Naive thymus-derived CD4-positive, alpha-beta T cell (primary cell): ENCODE measurements at regions of chr13 and their contacts with region 1.

Region 1: DNA sequence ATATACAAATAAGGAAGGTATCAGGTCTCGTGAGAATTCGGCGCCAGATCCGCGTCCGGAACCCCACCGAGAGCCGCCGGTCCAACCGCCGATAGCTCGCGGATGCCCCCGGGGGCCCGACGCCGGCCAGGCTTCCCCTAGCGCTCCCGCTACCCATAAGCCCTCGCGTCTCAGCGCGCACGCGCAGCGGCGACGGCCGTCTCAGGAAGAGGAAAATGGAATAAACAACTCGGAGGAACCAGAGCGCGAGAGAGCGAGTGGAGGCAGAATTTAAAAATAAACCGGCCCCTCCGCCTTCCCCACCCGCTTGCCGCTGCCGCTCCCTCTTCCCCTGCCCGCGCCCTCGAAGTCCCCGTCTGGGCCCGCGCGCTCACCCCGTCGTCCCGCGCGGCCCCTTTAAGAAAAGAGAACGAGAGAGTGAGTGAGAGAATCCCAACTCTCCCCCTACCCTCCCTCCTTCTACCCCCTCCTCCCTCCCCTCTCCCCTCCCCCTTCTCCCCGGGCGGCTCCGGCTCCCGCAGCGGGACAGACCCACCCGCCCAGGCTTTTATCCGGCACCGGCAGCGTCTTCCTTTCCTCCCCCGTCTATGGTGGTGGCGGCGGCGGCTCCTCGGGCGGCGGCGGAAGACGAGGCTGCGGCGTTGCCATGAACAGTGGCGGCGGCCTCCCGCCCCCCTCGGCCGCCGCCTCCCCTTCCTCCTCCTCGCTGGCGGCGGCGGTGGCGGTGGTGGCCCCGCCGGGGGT is at the start of gene PAN3:
- DNase-seq: peak; percentile 88 to 92 (median 91)
- ATAC-seq: peak; percentile 73
- H3K4me3 ChIP-seq: peak within 1 kb of the TSS; percentile 56
- H3K4me3 Mint-ChIP-seq: peak within 1 kb of the TSS; percentile 90 to 99 (median 96)
- H3K27ac ChIP-seq: peak within 1 kb of the TSS; percentile 99
- H3K27ac Mint-ChIP-seq: peak within 1 kb of the TSS; percentile 96 to 99 (median 98)
- H3K4me1 ChIP-seq: peaks cover 24% of the 10 kb centered on the region in 2 donors
- H3K4me1 Mint-ChIP-seq: peaks cover 43 to 52% (median 47%) of the 10 kb centered on the region in 7 donors
- H3K27me3 ChIP-seq: no peaks in the 10 kb centered on the region
- H3K27me3 Mint-ChIP-seq: peaks cover 0 to 2% (median 0%) of the 10 kb centered on the region in 5 donors
- total RNA-seq, gene PAN3: 49.9 to 82.5 (median 76.4) TPM

Region 2: GRCh38 chr13:27130979-27131623 is 1007.1 kb before region 1 on chr13:
- CTCF ChIA-PET with region 1: no interaction called
- POLR2A ChIA-PET with region 1: no interaction called
- intact Hi-C with region 1: loop called in 1 of 2 experiments (anchors 1 kb)
- DNase-seq: peak in 3 of 9 donors; percentile 13 to 71 (median 46)
- ATAC-seq: peak; percentile 90
- H3K4me3 ChIP-seq: no peak overlapping the region
- H3K4me3 Mint-ChIP-seq: peak overlapping the region in 5 of 10 donors; percentile 29 to 71 (median 47)
- H3K27ac ChIP-seq: no peak overlapping the region
- H3K27ac Mint-ChIP-seq: peak overlapping the region in 5 of 9 donors; percentile 60 to 87 (median 76)
- H3K4me1 ChIP-seq: peaks cover 0 to 14% of the 10 kb centered on the region in 2 donors
- H3K4me1 Mint-ChIP-seq: peaks cover 46 to 89% (median 82%) of the 10 kb centered on the region in 7 donors
- H3K27me3 ChIP-seq: no peaks in the 10 kb centered on the region
- H3K27me3 Mint-ChIP-seq: no peaks in the 10 kb centered on the region

Region 3: DNA sequence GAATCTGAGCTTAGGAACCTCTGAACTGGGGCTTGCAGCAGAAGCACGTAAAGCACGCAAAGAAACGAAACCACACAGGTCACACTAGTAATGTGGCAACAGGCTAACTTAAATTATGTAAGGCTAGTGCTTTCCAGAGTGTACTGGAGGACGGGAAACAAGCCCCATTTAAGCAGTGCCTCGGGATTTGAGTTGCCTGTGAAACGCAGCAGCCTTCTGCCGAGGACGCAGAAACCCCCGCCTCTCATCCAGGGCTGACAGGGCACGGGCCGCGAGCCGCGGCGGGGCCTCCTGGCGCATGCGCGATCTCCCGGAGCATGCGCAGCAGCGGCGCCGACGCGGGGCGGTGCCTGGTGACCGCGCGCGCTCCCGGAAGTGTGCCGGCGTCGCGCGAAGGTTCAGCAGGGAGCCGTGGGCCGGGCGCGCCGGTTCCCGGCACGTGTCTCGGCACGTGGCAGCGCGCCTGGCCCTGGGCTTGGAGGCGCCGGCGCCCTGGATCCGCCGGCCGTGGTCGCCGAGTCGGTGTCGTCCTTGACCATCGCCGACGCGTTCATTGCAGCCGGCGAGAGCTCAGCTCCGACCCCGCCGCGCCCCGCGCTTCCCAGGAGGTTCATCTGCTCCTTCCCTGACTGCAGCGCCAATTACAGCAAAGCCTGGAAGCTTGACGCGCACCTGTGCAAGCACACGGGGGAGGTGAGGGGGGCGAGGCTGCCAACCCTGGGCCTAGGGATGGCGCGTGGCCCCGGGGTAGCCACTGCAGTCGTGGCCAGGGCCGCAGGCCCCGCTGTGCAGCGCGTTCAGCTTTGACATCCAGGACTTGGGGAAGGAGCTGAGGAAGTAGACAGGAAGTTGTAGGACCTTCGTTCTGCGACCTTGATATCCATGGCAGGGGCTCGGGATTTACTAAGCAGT is 713.7 kb before region 1 on chr13 and contains the start of gene GTF3A:
- CTCF ChIA-PET with region 1: no interaction called
- POLR2A ChIA-PET with region 1: interaction called, 4 read pairs
- intact Hi-C with region 1: loop called (anchors 1 to 2 kb)
- DNase-seq: peak; percentile 83 to 97 (median 93)
- ATAC-seq: peak; percentile 77
- H3K4me3 ChIP-seq: peak within 1 kb of the TSS; percentile 71
- H3K4me3 Mint-ChIP-seq: peak within 1 kb of the TSS; percentile 81 to 96 (median 92)
- H3K27ac ChIP-seq: peak within 1 kb of the TSS; percentile 86
- H3K27ac Mint-ChIP-seq: peak within 1 kb of the TSS; percentile 88 to 98 (median 95)
- H3K4me1 ChIP-seq: peaks cover 24 to 45% of the 10 kb centered on the region in 2 donors
- H3K4me1 Mint-ChIP-seq: peaks cover 27 to 47% (median 42%) of the 10 kb centered on the region in 7 donors
- H3K27me3 ChIP-seq: no peaks in the 10 kb centered on the region
- H3K27me3 Mint-ChIP-seq: no peaks in the 10 kb centered on the region
- total RNA-seq, gene GTF3A: 123 to 254 (median 206) TPM

Region 4: GRCh38 chr13:28058866-28059624 is 79.1 kb before region 1 on chr13:
- CTCF ChIA-PET with region 1: no interaction called
- POLR2A ChIA-PET with region 1: no interaction called
- intact Hi-C with region 1: loop called (anchors 1 kb)
- DNase-seq: peak in 7 of 9 donors; percentile 10 to 33 (median 17)
- ATAC-seq: peak; percentile 38
- H3K4me3 ChIP-seq: no peak overlapping the region
- H3K4me3 Mint-ChIP-seq: no peak overlapping the region
- H3K27ac ChIP-seq: no peak overlapping the region
- H3K27ac Mint-ChIP-seq: peak overlapping the region in 1 of 9 donors; percentile 62
- H3K4me1 ChIP-seq: no peaks in the 10 kb centered on the region
- H3K4me1 Mint-ChIP-seq: peaks cover 0 to 4% (median 0%) of the 10 kb centered on the region in 7 donors
- H3K27me3 ChIP-seq: peaks cover 2 to 3% of the 10 kb centered on the region in 2 donors
- H3K27me3 Mint-ChIP-seq: peaks cover 8 to 24% (median 16%) of the 10 kb centered on the region in 5 donors

Region 5: DNA sequence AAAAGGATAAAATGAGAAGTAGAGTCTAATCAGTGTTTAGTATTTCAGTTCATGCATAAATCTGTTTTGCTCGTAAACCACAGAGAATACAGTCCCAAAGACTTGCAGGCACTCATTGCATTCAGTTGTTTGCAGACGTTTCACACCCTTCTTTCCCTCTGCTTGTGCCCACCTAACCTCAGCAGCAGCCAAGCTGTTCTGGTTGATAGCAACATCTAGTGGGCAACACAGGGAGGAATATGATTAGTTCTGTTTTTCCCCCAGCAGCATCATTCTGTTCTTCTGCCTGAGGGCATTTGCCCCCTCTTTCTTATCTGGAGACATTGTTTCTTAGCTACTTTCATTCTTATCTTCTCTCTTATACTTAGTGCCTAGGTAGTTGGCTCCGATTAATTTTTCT is 135.7 kb after region 1 on chr13:
- CTCF ChIA-PET with region 1: no interaction called
- POLR2A ChIA-PET with region 1: no interaction called
- intact Hi-C with region 1: loop called in 1 of 2 experiments (anchors 5 kb)
- DNase-seq: no peak
- ATAC-seq: no peak
- H3K4me3 ChIP-seq: no peak overlapping the region
- H3K4me3 Mint-ChIP-seq: no peak overlapping the region
- H3K27ac ChIP-seq: no peak overlapping the region
- H3K27ac Mint-ChIP-seq: peak overlapping the region in 3 of 9 donors; percentile 5 to 40 (median 12)
- H3K4me1 ChIP-seq: no peaks in the 10 kb centered on the region
- H3K4me1 Mint-ChIP-seq: peaks cover 0 to 8% (median 0%) of the 10 kb centered on the region in 7 donors
- H3K27me3 ChIP-seq: no peaks in the 10 kb centered on the region
- H3K27me3 Mint-ChIP-seq: no peaks in the 10 kb centered on the region

Region 6: GRCh38 chr13:28329395-28330158 is 191.4 kb after region 1 on chr13:
- CTCF ChIA-PET with region 1: no interaction called
- POLR2A ChIA-PET with region 1: no interaction called
- intact Hi-C with region 1: no loop called
- DNase-seq: no peak
- ATAC-seq: peak; percentile 48
- H3K4me3 ChIP-seq: no peak overlapping the region
- H3K4me3 Mint-ChIP-seq: no peak overlapping the region
- H3K27ac ChIP-seq: no peak overlapping the region
- H3K27ac Mint-ChIP-seq: no peak overlapping the region
- H3K4me1 ChIP-seq: no peaks in the 10 kb centered on the region
- H3K4me1 Mint-ChIP-seq: no peaks in the 10 kb centered on the region
- H3K27me3 ChIP-seq: no peaks in the 10 kb centered on the region
- H3K27me3 Mint-ChIP-seq: peaks cover 0 to 3% (median 0%) of the 10 kb centered on the region in 5 donors

Region 7: DNA sequence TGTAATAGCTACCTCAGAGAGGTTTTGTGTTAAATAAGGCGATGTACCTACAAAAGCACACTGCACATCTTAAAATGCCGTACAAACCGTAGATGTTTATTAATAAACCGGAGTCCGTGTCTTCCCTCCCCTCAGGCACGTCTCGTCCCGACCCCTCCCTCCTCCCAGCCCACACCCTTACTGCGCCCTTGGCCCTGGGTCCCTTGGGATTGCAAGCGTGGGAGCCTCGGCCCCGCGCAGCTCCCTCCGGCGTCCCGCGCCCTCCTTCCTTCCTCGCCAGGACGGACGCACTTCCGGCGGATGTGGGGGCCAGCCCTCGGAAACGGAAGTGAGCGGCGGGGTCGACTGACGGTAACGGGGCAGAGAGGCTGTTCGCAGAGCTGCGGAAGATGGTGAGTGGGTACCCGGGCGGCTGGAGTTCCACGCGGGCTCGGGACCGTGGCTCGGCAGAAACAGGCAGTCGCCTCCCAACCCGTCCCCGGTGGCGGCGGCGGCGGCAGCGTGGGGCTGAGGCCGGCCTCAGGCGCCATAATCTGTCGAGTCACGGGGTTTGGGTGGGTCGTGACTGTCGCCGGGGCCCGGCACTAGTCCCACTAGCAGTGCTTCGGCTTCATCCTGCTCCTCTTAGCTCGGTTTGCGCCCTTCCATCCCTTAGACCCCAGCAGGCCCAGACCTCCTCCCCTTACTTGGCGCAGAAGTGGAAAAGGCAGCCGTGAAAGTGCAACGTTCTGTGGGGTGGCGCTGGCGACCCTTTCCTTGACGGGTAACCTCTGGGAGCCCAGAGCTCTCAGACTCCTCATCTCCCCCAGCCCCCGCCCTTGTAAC is 520.8 kb after region 1 on chr13 and contains the start of gene POMP:
- CTCF ChIA-PET with region 1: no interaction called
- POLR2A ChIA-PET with region 1: interaction called, 11 read pairs
- intact Hi-C with region 1: loop called (anchors 1 kb)
- DNase-seq: peak; percentile 83 to 96 (median 93)
- ATAC-seq: peak; percentile 95
- H3K4me3 ChIP-seq: peak within 1 kb of the TSS; percentile 86
- H3K4me3 Mint-ChIP-seq: peak within 1 kb of the TSS; percentile 88 to 100 (median 98)
- H3K27ac ChIP-seq: peak within 1 kb of the TSS; percentile 96
- H3K27ac Mint-ChIP-seq: peak within 1 kb of the TSS; percentile 94 to 99 (median 99)
- H3K4me1 ChIP-seq: peaks cover 25 to 29% of the 10 kb centered on the region in 2 donors
- H3K4me1 Mint-ChIP-seq: peaks cover 38 to 84% (median 69%) of the 10 kb centered on the region in 7 donors
- H3K27me3 ChIP-seq: no peaks in the 10 kb centered on the region
- H3K27me3 Mint-ChIP-seq: no peaks in the 10 kb centered on the region
- total RNA-seq, gene POMP: 18.8 to 97.0 (median 21.2) TPM

Region 8: DNA sequence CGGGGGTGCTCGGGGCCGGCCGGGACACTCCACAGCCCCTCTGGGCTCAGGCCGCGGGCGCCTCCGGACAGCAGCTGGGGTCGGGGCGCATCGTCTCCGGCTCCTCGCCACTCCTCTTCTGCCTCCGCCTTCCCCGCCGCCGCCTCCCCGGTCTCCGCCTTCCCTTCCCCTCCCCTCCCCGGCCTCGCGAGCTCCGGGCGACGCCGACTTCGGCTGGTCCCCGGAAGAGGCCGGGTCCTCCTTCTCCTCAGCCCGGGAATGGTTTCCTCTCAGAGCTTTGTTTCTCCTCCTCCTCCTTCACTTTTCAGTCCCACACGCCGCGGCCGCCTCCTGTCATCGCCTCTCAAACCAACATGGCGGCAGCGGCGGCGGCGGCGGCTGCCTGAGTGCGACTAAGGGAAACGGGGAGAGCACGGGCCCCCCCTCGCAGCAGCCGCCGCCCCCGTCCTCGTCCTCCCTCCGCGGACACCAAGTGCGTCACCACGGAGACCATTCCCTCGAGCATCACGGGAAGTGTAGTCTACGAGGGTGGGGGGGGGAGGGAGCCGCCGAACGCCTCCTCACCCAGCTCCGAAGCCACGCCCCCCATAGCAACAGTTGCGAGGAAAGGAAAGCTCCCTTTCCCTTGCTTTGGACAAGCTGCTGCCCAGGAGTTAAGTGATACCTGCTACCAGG is 1712.2 kb after region 1 on chr13 and contains the start of gene UBL3:
- CTCF ChIA-PET with region 1: no interaction called
- POLR2A ChIA-PET with region 1: no interaction called
- intact Hi-C with region 1: loop called in 1 of 2 experiments (anchors 2 kb)
- DNase-seq: peak; percentile 88 to 95 (median 92)
- ATAC-seq: peak; percentile 97
- H3K4me3 ChIP-seq: peak within 1 kb of the TSS; percentile 78
- H3K4me3 Mint-ChIP-seq: peak within 1 kb of the TSS; percentile 91 to 99 (median 96)
- H3K27ac ChIP-seq: peak within 1 kb of the TSS; percentile 98
- H3K27ac Mint-ChIP-seq: peak within 1 kb of the TSS; percentile 91 to 100 (median 99)
- H3K4me1 ChIP-seq: peaks cover 5 to 13% of the 10 kb centered on the region in 2 donors
- H3K4me1 Mint-ChIP-seq: peaks cover 10 to 42% (median 24%) of the 10 kb centered on the region in 7 donors
- H3K27me3 ChIP-seq: no peaks in the 10 kb centered on the region
- H3K27me3 Mint-ChIP-seq: no peaks in the 10 kb centered on the region
- total RNA-seq, gene UBL3: 12.7 to 34.5 (median 28.9) TPM